K562 (cell line): ENCODE measurements at regions of chr16 and their contacts with region 1.

Region 1: GRCh38 chr16:23217646-23218045 is 35.1 kb downstream of the SCNN1G start:
- DNase-seq: no peak
- ATAC-seq: no peak
- H3K4me3 ChIP-seq: no peak overlapping the region
- H3K27ac ChIP-seq: no peak overlapping the region
- H3K4me1 ChIP-seq: no peaks in the 10 kb centered on the region; a peak in 1 of 5 replicates
- H3K27me3 ChIP-seq: peaks cover 0 to 22% of the 10 kb centered on the region in 2 experiments; a peak in 2 of 5 replicates
- CTCF ChIP-seq: no peak
- EP300 ChIP-seq: no peak
- POLR2A ChIP-seq: no peak
- RAD21 ChIP-seq: no peak

Region 2: GRCh38 chr16:23195366-23195978 is 22.2 kb before region 1 on chr16:
- CTCF ChIA-PET with region 1: no interaction called
- POLR2A ChIA-PET with region 1: no interaction called
- in situ Hi-C with region 1: no loop called
- intact Hi-C with region 1: no loop called
- DNase-seq: no peak
- ATAC-seq: no peak
- H3K4me3 ChIP-seq: no peak overlapping the region
- H3K27ac ChIP-seq: no peak overlapping the region
- H3K4me1 ChIP-seq: no peaks in the 10 kb centered on the region
- H3K27me3 ChIP-seq: peaks cover 5 to 19% of the 10 kb centered on the region in 2 experiments; a peak in 3 of 5 replicates
- CTCF ChIP-seq: no peak
- EP300 ChIP-seq: no peak
- POLR2A ChIP-seq: no peak
- RAD21 ChIP-seq: no peak

Region 3: DNA sequence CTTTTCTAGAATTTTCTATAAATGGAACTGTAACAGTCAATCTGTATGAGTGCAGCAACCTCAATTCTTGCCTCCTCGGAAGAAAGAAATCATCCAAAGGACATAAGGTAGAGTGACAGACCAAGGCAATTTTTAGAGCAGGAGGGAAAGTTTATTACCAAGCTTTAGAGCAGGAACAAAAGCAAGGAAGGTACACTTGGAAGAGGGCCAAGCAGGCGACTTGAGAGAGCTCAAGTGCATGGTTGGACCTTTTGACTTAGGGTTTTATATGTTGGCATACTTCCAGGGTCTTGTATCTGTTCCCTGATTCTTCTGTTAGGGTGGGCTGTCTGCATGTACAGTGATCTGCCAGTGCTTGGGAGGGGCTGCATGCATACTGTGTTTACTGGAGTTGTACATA is 15.2 kb after region 1 on chr16:
- CTCF ChIA-PET with region 1: no interaction called
- POLR2A ChIA-PET with region 1: interaction called, 11 read pairs
- in situ Hi-C with region 1: no loop called
- intact Hi-C with region 1: no loop called
- DNase-seq: no peak
- ATAC-seq: no peak
- H3K4me3 ChIP-seq: no peak overlapping the region
- H3K27ac ChIP-seq: no peak overlapping the region
- H3K4me1 ChIP-seq: no peaks in the 10 kb centered on the region
- H3K27me3 ChIP-seq: peaks cover 11 to 32% of the 10 kb centered on the region in 2 experiments; a peak in 4 of 5 replicates
- CTCF ChIP-seq: no peak
- EP300 ChIP-seq: no peak
- POLR2A ChIP-seq: no peak
- RAD21 ChIP-seq: no peak

Region 4: GRCh38 chr16:23324730-23325129 is 107.1 kb after region 1 on chr16:
- CTCF ChIA-PET with region 1: no interaction called
- POLR2A ChIA-PET with region 1: no interaction called
- in situ Hi-C with region 1: no loop called
- intact Hi-C with region 1: no loop called
- DNase-seq: no peak
- ATAC-seq: no peak
- H3K4me3 ChIP-seq: no peak overlapping the region
- H3K27ac ChIP-seq: no peak overlapping the region
- H3K4me1 ChIP-seq: no peaks in the 10 kb centered on the region
- H3K27me3 ChIP-seq: peaks cover 18 to 23% of the 10 kb centered on the region in 2 experiments; a peak in 4 of 5 replicates
- CTCF ChIP-seq: no peak
- EP300 ChIP-seq: no peak
- POLR2A ChIP-seq: no peak
- RAD21 ChIP-seq: no peak